Gastrocnemius medialis (tissue), 4 donors: ENCODE measurements at regions of chr1 and their contacts with region 1.

Region 1: DNA sequence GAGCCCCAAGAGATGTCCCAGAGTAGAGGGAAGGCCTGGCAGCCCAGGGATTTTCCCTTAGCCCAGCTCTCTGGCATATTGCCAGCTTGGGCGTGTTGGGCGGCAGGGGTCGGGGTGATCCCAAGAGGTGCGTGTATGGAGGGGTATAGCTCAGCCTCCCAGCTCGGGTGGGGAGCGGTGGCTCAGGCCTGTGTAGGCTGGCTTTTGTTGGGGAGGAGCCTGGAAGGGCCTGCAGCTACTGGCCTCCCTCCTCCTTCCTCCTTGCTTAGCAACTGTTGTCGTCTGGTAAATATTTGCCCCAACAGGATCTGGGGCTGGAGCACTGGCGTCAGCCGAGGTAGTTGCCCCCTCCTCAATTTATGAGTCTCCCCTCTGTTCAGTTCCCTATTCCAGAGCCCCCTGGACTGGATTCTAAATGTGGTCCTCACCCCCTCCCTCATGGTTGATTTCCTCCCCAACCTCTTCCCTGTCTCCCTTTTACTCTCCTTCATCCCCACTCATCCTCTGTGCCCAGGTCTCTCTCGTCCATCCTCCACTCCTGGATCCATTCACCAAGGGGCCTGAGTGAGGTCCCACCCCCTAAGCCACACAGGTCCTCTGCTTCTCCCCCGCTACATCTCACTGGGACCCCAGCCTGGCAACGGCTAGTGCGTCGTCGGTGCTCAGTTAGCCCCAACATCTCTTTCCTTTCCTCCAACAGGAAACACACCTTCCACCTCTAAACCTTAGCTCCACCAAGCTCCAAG is 10.3 kb upstream of the LMNA start:
- DNase-seq: peak in 1 of 2 donors; percentile 37
- ATAC-seq: no peak
- H3K4me3 ChIP-seq: no peak overlapping the region
- H3K27ac ChIP-seq: peak overlapping the region; percentile 96 to 99 (median 98)
- H3K4me1 ChIP-seq: peaks cover 61 to 69% of the 10 kb centered on the region in 2 donors
- H3K27me3 ChIP-seq: no peaks in the 10 kb centered on the region
- CTCF ChIP-seq: no peak
- POLR2A ChIP-seq: no peak

Region 2: GRCh38 chr1:156020292-156021089 is 83.7 kb before region 1 on chr1 and contains the start of gene SSR2:
- in situ Hi-C with region 1: no loop called
- intact Hi-C with region 1: no loop called
- DNase-seq: peak; percentile 86 to 87
- ATAC-seq: peak; percentile 100
- H3K4me3 ChIP-seq: peak within 1 kb of the TSS; percentile 72 to 94 (median 91)
- H3K27ac ChIP-seq: peak within 1 kb of the TSS; percentile 86 to 90 (median 88)
- H3K4me1 ChIP-seq: peaks cover 8 to 10% of the 10 kb centered on the region in 2 donors
- H3K27me3 ChIP-seq: no peaks in the 10 kb centered on the region
- CTCF ChIP-seq: no peak
- POLR2A ChIP-seq: peak in 1 of 2 donors; percentile 39
- total RNA-seq, gene SSR2: 70.6 to 118 (median 108) TPM

Region 3: DNA sequence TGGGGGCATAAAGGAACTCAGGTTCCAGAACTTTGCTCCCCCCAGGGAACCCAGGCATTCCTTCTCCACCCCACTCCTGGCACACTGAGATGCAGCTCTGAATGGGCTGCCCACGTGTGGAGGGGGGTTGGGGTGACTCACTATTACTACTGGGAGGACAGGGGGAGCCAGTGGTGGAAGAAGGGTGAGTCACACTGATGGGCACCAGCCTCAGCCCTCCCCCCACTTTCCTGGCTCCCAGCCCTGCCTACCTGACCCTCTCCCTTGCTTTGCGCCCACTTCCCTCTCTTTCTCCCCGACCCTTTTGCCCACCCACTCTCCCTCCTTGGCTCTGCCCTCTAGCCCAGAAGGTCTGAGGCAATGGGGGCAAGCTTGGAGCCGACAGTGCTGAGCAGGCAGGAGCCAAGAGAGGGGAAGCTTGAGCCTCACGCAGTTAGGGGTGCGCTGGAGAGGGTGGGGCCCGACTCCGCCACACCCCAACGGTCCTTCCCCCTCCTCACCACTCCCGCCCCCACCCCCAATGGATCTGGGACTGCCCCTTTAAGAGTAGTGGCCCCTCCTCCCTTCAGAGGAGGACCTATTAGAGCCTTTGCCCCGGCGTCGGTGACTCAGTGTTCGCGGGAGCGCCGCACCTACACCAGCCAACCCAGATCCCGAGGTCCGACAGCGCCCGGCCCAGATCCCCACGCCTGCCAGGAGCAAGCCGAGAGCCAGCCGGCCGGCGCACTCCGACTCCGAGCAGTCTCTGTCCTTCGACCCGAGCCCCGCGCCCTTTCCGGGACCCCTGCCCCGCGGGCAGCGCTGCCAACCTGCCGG is 10.1 kb after region 1 on chr1 and contains the start of gene LMNA:
- in situ Hi-C with region 1: no loop called
- intact Hi-C with region 1: loop called (anchors 1 kb)
- DNase-seq: peak; percentile 92 to 95
- ATAC-seq: peak; percentile 71 to 78
- H3K4me3 ChIP-seq: peak within 1 kb of the TSS; percentile 94 to 100 (median 96)
- H3K27ac ChIP-seq: peak within 1 kb of the TSS; percentile 98 to 99 (median 98)
- H3K4me1 ChIP-seq: peaks cover 57 to 59% of the 10 kb centered on the region in 2 donors
- H3K27me3 ChIP-seq: no peaks in the 10 kb centered on the region
- CTCF ChIP-seq: no peak
- POLR2A ChIP-seq: peak; percentile 98
- total RNA-seq, gene LMNA: 143 to 244 (median 220) TPM

Region 4: GRCh38 chr1:156123356-156124196 is 19.3 kb after region 1 on chr1:
- in situ Hi-C with region 1: no loop called
- intact Hi-C with region 1: loop called (anchors 2 kb)
- DNase-seq: peak; percentile 91 to 98
- ATAC-seq: peak; percentile 64 to 73
- H3K4me3 ChIP-seq: peak overlapping the region; percentile 47 to 59 (median 48)
- H3K27ac ChIP-seq: peak overlapping the region; percentile 98 to 99 (median 98)
- H3K4me1 ChIP-seq: peaks cover 98 to 99% of the 10 kb centered on the region in 2 donors
- H3K27me3 ChIP-seq: no peaks in the 10 kb centered on the region
- CTCF ChIP-seq: peak in 3 of 5 experiments; percentile 32 to 48 (median 47)
- POLR2A ChIP-seq: peak; percentile 86 to 88

Region 5: DNA sequence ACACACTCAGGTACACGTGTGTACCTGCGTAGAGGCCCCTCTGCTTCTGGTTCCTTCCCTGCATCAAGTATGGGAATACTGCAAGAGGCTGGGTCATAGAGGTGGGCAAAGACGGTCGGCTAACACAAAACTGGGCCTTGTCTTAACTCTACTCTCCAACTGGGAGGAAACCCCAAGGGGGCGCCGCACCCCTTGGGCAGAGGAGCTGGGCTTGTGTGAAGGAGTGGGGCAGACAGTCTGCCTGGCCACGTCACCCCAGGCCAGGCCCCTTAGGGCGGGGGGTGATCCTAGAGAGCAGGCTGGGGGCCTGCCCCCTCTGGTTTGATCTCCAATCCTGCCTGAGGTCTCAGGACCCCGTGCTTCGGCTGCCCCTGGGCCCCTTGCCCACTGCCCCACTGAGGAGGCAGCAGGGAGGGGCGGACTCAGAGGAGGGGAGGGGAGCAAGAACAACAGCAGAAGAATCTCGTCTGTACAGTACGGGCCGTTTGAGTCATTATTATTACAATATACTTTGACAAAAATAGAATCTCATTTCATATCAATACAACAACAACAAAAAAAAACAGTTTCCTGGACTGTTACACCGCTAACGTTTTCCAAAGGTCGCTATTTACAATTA is 361.6 kb after region 1 on chr1:
- in situ Hi-C with region 1: no loop called
- intact Hi-C with region 1: loop called (anchors 10 kb)
- DNase-seq: no peak
- ATAC-seq: no peak
- H3K4me3 ChIP-seq: no peak overlapping the region
- H3K27ac ChIP-seq: peak overlapping the region; percentile 96 to 99 (median 98)
- H3K4me1 ChIP-seq: peaks cover 44 to 45% of the 10 kb centered on the region in 2 donors
- H3K27me3 ChIP-seq: no peaks in the 10 kb centered on the region
- CTCF ChIP-seq: peak in 1 of 5 experiments; percentile 23
- POLR2A ChIP-seq: no peak